PC-3 (cell line): ENCODE measurements at regions of chr20 and their contacts with region 1.

Region 1: GRCh38 chr20:38023181-38024001 is 9.9 kb downstream of the TTI1 start:
- DNase-seq: peak; percentile 61
- ATAC-seq: peak; percentile 87
- H3K4me3 ChIP-seq: no peak overlapping the region
- H3K27ac ChIP-seq: peak overlapping the region; percentile 45
- H3K4me1 ChIP-seq: peaks cover 42% of the 10 kb centered on the region
- H3K27me3 ChIP-seq: no peaks in the 10 kb centered on the region
- CTCF ChIP-seq: no peak

Region 2: DNA sequence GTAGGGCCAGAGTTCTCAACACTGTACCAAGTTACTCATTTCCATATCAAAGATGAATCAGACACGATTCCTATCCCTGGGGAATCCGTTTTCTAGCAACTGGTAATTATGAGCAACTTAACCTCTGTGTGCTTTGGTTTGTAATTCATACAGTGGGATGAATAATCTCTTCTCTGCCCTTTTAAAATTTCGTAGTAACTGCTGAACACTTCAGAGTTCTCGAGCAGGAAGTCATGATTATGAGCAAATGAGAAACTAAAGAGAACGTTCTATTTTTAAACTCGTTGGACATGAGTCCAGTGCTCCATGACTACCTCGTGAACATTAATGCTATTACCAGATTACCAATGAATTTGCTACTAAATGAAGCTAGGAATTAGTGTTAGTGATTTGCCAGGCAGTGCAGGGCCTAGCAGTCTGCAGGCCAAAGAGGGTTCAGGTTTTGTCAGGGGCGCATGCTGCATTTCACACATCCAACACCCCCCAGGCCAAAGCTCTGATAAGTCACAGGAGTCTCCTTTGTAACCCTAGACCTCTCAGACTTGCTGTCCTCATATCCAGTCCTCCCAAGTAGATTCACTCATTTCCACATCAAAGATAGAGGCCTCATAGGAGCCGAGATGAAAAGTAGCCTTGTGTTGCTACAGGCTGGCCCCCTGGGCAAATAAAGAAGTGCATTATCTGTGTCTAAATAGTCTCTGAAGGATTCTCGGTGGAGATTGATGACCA is 166.3 kb before region 1 on chr20:
- CTCF ChIA-PET with region 1: no interaction called
- POLR2A ChIA-PET with region 1: interaction called, 15 read pairs
- intact Hi-C with region 1: no loop called
- DNase-seq: peak; percentile 43
- ATAC-seq: peak; percentile 61
- H3K4me3 ChIP-seq: no peak overlapping the region
- H3K27ac ChIP-seq: peak overlapping the region; percentile 52
- H3K4me1 ChIP-seq: no peaks in the 10 kb centered on the region
- H3K27me3 ChIP-seq: no peaks in the 10 kb centered on the region
- CTCF ChIP-seq: no peak

Region 3: GRCh38 chr20:37886851-37887297 is 136.5 kb before region 1 on chr20:
- CTCF ChIA-PET with region 1: no interaction called
- POLR2A ChIA-PET with region 1: no interaction called
- intact Hi-C with region 1: no loop called
- DNase-seq: no peak
- ATAC-seq: no peak; the same call in none of the 2 replicates
- H3K4me3 ChIP-seq: no peak overlapping the region
- H3K27ac ChIP-seq: no peak overlapping the region
- H3K4me1 ChIP-seq: no peaks in the 10 kb centered on the region
- H3K27me3 ChIP-seq: no peaks in the 10 kb centered on the region
- CTCF ChIP-seq: no peak

Region 4: GRCh38 chr20:38001173-38001872 is 22.1 kb before region 1 on chr20:
- CTCF ChIA-PET with region 1: no interaction called
- POLR2A ChIA-PET with region 1: no interaction called
- intact Hi-C with region 1: loop called (anchors 1 kb)
- DNase-seq: peak; percentile 85
- ATAC-seq: peak; percentile 98
- H3K4me3 ChIP-seq: 0 out of 2 replicates have a peak overlapping the region, but pooled peaks have one; percentile 8
- H3K27ac ChIP-seq: peak overlapping the region; percentile 86
- H3K4me1 ChIP-seq: peaks cover 22% of the 10 kb centered on the region
- H3K27me3 ChIP-seq: no peaks in the 10 kb centered on the region
- CTCF ChIP-seq: no peak